Posterior vena cava (tissue), 2 donors: ENCODE measurements at regions of chr5 and their contacts with region 1.

Region 1: GRCh38 chr5:22614486-22615094 is 238.6 kb downstream of the CDH12 start:
- DNase-seq: no peak

Region 2: DNA sequence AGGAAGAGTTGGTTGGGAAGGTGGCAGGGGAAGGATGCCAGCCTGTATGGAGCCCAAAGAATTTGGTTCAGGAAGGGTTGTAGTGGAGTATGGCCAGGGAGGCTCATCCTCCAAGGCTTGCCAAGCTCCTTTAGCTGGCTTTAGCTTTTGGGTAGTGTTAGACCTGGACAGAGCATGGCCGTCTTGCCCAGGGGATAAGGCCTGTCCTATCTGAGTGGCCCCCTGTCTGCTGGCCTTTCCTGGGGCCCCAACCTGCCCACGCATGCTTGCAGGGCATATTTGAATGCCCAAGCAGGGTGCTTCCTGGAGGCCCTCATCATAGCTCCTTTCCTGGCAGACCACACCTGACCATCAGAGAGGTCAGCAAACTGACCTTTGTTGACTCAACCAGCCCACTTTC is 10.9 kb after region 1 on chr5:
- intact Hi-C with region 1: loop called in 1 of 2 experiments (anchors 1 kb)
- DNase-seq: no peak

Region 3: DNA sequence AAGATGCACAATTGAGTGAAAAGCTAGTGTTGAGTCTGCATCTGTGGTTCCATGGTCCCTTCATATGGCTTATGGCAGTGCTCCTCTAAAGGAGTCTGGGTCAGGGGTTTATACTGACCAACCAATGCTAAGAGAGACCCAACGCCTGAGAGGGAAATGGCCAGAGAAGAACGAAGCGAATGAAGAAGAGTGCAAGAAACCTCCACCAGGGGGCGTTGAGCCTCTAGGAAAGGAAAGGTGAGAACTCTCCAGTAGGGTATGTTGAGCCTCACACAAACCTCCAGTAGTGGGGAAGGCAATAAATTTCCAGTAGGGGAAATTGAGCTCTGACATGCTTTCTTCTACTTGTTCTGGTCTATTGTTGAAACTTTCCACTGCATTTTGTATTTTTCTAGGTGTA is 1363.4 kb after region 1 on chr5:
- intact Hi-C with region 1: loop called in 1 of 2 experiments (anchors 5 kb)
- DNase-seq: no peak